Left lung (tissue), 14 donors: ENCODE measurements at regions of chr7 and their contacts with region 1.

Region 1: GRCh38 chr7:115008465-115009114 is 86.7 kb downstream of the MDFIC start:
- DNase-seq: peak in 1 of 4 donors; percentile 53
- ATAC-seq: peak; percentile 75
- H3K4me3 ChIP-seq: no peak overlapping the region
- H3K27ac ChIP-seq: peak overlapping the region; percentile 39 to 69
- H3K4me1 ChIP-seq: peaks cover 13 to 30% of the 10 kb centered on the region in 2 donors
- H3K27me3 ChIP-seq: no peaks in the 10 kb centered on the region
- CTCF ChIP-seq: no peak

Region 2: DNA sequence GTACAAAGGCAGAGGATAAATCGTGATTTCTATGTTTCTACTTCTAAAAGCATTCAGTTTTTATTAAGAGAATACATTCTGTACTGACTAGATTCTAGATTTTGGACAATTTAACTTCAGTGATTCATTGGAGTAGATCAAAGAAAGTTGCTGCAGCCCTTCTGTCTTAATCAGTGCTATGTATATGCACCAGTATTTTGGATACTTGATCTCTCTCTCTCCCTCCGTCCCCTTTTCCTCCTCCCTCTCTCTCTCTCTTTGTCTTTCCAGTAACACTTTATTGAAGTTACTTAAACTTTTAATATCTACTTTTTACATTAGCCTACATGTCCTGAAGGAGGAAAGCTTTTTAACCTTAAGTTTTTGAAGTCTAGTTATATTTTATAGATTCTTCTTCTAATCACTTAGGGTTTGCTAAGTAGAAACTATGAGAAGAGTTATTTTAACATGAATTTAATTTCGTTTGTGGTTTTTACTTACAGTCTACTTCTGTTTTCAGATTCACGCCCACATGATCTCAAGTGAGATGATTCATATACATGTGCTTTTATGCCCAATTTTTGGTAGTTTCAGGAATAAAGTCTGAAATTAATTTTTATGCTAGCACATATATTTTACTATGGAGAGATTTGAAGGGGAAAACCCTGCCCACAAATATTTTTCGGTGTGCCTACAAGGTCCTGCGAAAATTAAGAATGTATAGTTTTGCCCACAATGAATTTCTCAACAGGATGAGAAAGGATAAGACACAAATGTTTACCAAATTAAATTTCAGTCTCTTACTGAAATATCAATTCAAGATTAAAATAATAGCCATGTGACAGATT is 77.5 kb before region 1 on chr7:
- intact Hi-C with region 1: loop called in 1 of 2 experiments (anchors 10 kb)
- DNase-seq: no peak
- ATAC-seq: peak; percentile 47
- H3K4me3 ChIP-seq: no peak overlapping the region
- H3K27ac ChIP-seq: peak overlapping the region; percentile 68 to 69
- H3K4me1 ChIP-seq: peaks cover 35 to 93% of the 10 kb centered on the region in 2 donors
- H3K27me3 ChIP-seq: no peaks in the 10 kb centered on the region
- CTCF ChIP-seq: no peak